ENCODE measurements at regions of chr1 and their contacts with region 1.

Region 1: DNA sequence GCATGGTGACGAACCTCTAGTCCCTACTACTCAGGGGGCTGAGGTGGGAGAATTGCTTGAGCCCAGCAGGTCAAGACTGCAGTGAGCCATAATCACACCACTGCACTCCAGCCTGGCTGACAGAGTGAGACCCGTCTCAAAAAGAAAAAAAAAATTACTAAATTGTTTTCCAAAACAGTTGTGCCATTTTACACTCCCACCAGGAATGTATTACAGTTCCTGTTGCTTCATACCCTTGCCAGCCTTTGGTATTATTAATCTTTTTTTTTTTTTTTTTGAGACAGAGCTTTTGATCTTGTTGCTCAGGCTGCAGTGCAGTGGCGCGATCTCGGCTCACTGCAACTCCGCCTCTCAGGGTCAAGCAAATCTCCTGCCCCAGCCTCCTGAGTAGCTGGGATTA is 55.9 kb downstream of the RPS6KA1 start:
- H3K4me3 ChIP-seq: no peak overlapping the region
- H3K27ac ChIP-seq: no peak overlapping the region
- H3K4me1 ChIP-seq: no peaks in the 10 kb centered on the region
- CTCF ChIP-seq: no peak

Region 2: DNA sequence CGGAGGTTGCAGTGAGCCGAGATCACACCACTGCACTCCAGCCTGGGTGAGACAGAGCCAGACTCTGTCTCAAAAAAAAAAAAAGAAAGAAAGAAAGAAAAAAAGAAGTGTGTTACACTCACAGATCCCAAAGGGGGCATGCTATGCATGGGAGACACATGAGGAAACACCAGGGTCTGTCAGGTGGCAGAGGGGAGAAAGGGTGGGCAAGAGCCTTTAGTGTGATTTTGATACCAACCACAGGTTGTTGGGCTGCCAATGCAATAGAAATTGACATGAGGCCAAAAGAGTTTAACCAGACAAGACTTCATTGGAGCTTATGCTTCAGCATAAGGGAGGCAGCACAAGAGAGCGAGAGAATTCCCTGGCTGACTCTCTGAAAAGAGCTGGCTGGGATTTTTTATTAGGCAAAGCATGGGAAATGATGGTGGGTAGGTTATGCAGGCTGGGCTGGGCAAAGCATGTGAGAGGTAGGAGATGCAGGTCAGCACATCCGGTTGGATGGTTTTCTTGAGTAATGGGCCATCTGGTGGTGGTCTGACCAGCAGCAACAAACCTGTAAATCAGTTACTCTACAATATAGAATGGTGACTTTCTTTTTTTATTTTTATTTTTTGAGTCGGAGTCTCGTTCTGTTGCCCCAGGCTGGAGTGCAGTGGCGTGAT is 575.5 kb before region 1 on chr1:
- CTCF ChIA-PET with region 1: interaction called, 10 read pairs
- POLR2A ChIA-PET with region 1: no interaction called
- H3K4me3 ChIP-seq: no peak overlapping the region
- H3K27ac ChIP-seq: no peak overlapping the region
- H3K4me1 ChIP-seq: no peaks in the 10 kb centered on the region
- CTCF ChIP-seq: peak; percentile 42; the same call in 1 of the 2 replicates

Region 3: GRCh38 chr1:26482921-26483680 is 102.4 kb before region 1 on chr1:
- CTCF ChIA-PET with region 1: no interaction called
- POLR2A ChIA-PET with region 1: no interaction called
- H3K4me3 ChIP-seq: no peak overlapping the region
- H3K27ac ChIP-seq: no peak overlapping the region
- H3K4me1 ChIP-seq: no peaks in the 10 kb centered on the region
- CTCF ChIP-seq: no peak

Measured in HEK293 (cell line).